ENCODE measurements at regions of chr5 and their contacts with region 1.

Region 1: DNA sequence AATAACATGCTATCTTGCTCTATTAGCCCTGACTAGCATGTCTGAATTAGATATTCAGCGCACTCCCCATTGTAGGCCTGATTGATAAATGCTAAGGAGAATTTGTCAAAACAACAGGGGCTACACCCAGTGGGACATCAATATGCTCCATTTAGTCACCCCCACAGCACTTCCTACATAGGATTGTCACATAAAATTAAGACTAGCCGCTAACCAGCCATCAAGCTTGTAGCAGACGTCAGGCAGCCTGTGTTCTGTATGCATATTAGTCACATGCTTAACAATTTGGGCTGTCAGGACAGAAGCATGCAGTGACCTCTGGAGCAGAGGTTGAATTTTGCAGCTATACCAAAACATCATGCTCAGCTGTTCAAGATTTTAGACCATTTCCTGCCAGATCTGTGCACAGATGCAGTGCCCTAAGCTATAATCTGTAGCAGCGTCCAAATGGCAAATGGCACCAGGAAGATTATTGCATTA is 197.4 kb upstream of the ISL1 start:
- DNase-seq: peak; percentile 41
- H3K4me3 ChIP-seq: no peak overlapping the region
- H3K27ac ChIP-seq: peak overlapping the region in 1 of 2 experiments; percentile 98; a peak in 2 of 4 replicates
- H3K4me1 ChIP-seq: peaks cover 0 to 20% of the 10 kb centered on the region in 2 experiments; a peak in 2 of 4 replicates
- H3K27me3 ChIP-seq: no peaks in the 10 kb centered on the region
- CTCF ChIP-seq: no peak
- EP300 ChIP-seq: peak in 1 of 2 experiments; percentile 98; a peak in 2 of 4 replicates
- RAD21 ChIP-seq: peak; percentile 64

Region 2: DNA sequence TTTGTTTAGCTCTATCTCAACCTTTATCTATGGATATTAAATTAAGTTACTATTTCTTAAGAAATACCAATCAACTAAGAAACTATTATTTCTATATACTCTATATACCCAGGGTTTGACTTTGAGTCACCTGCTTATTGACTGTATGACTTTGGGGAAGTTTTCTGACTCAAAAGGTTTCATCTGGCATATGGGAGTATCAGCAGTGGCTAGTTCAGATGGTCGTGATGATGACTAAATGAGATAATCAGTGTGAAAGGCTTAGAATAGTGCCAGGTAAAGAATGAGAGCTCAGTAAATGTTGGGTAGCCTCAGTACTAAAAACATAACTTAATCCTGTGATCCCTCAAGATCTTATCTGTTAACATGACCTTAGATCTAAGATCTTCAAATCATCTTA is 17.7 kb after region 1 on chr5:
- CTCF ChIA-PET with region 1: no interaction called
- POLR2A ChIA-PET with region 1: no interaction called
- DNase-seq: no peak
- H3K4me3 ChIP-seq: no peak overlapping the region
- H3K27ac ChIP-seq: no peak overlapping the region
- H3K4me1 ChIP-seq: peaks cover 0 to 8% of the 10 kb centered on the region in 2 experiments; a peak in 2 of 4 replicates
- H3K27me3 ChIP-seq: no peaks in the 10 kb centered on the region
- CTCF ChIP-seq: no peak
- EP300 ChIP-seq: no peak
- RAD21 ChIP-seq: no peak

Region 3: DNA sequence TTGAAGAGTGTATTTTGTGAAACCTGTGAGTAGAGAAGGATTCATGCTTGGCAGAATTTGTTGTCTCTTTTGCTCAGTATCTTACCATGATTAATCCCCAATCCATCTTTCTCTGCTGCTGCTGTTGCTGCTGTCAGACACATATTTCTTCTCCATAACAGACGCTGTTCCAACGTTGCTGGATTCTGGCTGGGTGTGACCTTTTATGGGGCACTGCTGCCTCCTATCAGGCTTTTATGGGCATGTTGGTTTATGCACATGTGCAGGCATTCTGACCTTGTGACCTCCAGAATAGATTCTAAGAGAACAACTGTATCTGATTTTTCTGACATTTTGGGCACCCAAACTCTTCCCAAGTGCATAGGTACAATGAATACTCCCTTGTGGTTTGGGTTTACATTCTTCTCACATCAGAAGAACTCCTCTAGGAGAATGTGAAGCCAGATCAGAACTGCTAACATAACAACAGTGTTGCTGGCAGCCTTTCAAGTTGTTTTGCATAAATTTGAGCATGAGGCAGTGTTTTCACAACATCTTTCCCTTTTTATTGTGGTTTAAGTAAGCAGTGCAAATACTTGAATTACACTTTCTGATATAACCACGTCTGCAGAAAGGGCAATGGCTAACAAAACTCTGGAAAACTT is 188.1 kb after region 1 on chr5:
- CTCF ChIA-PET with region 1: interaction called, 17 read pairs
- POLR2A ChIA-PET with region 1: interaction called, 6 read pairs
- DNase-seq: peak; percentile 20
- H3K4me3 ChIP-seq: no peak overlapping the region
- H3K27ac ChIP-seq: peak overlapping the region in 1 of 2 experiments; percentile 88; a peak in 2 of 4 replicates
- H3K4me1 ChIP-seq: peaks cover 0 to 35% of the 10 kb centered on the region in 2 experiments; a peak in 2 of 4 replicates
- H3K27me3 ChIP-seq: no peaks in the 10 kb centered on the region
- CTCF ChIP-seq: 0 out of 2 replicates have a peak, but pooled peaks have one; percentile 16
- EP300 ChIP-seq: 0 out of 4 replicates have a peak, but pooled peaks of 1 of the 2 experiments have one; percentile 15
- RAD21 ChIP-seq: peak; percentile 81

Measured in SK-N-SH (cell line).